ENCODE measurements at regions of chr3 and their contacts with region 1.

Region 1: DNA sequence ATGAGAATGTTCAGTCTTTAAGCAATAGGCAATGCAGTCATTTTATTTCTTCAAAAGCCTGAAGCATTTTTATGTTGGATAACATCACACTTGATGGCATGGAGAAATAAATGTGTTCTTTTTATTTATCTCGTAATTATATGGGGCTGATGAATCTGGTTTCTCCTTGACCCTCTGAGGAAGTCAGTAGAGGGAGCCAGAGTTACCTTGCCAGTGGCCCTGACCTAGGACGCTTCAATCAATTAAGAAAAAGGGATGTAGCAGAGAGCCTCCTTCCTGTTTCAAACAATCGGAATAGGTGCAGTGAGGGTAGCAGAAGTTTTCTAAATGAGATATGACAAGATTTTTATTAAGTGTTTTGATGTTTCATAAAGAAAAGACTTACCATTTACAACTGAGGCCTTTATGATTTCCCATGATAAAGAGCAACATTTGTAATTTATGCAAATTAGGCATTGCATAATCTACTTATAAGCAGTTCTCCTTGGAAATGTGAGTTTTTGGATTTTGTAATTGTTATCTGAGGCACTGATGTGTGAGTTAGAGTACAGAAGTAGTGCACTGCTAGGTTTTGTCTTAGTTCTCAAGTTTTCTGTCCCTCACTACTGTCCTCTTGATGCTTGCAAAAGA is 129.1 kb downstream of the RAP2B start:
- DNase-seq: peak; percentile 65
- H3K4me3 Mint-ChIP-seq: no peak overlapping the region
- H3K27ac Mint-ChIP-seq: no peak overlapping the region
- H3K4me1 Mint-ChIP-seq: peaks cover 40% of the 10 kb centered on the region
- H3K27me3 Mint-ChIP-seq: no peaks in the 10 kb centered on the region
- CTCF ChIP-seq: peak; percentile 52

Region 2: DNA sequence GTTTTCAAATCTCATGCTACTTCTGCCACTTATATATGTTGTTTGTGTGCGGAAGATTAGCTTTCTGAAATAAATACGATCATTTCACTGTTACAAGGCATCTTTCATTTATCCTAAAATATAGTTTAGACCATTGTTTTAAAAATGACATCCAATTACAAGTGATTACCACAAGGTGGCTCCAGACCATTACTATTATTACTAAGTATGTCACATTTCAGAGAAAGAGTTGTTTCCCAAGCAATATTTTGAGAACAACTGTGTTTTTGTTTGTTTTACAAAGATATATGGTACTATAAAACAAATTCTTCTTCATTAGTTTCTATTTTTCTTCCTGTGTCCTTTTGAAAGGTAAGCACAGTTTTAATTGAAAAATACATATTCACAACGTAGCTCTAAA is 265.1 kb before region 1 on chr3:
- CTCF ChIA-PET with region 1: interaction called, 7 read pairs
- POLR2A ChIA-PET with region 1: no interaction called
- intact Hi-C with region 1: loop called (anchors 1 kb)
- DNase-seq: peak; percentile 57
- H3K4me3 Mint-ChIP-seq: no peak overlapping the region
- H3K27ac Mint-ChIP-seq: no peak overlapping the region
- H3K4me1 Mint-ChIP-seq: no peaks in the 10 kb centered on the region
- H3K27me3 Mint-ChIP-seq: no peaks in the 10 kb centered on the region
- CTCF ChIP-seq: peak; percentile 62

Region 3: DNA sequence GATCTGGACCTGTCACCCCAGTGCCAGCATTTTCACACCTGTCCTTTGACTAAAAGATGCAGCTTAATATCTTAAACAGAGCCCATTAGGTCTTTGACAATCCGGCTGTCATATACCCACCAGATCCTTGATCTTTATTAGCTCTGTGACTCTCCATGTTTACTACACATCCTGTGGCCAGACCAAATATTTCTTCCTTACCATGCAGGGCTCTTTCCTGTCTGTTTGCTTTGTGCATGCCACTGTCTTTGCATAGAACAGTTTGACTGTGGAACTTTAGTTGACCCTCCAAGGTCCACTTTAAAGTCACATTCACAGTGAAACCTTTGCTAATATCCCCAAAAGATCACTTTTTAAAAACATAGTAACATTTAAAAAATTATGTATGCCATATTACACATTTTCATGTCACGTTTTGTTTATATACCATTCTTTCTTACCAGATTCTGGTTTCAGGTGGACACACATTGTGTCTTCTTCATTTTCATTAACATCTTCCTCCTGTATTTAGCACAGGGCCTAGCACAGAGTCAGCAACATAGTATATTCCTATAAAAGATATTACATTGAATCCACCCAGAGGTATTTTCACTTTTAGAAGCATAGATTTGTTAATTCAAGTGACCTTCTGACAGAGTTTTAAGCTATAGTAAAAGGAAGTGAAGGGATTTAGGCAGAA is 33.4 kb before region 1 on chr3:
- CTCF ChIA-PET with region 1: no interaction called
- POLR2A ChIA-PET with region 1: no interaction called
- intact Hi-C with region 1: no loop called
- DNase-seq: no peak
- H3K4me3 Mint-ChIP-seq: no peak overlapping the region
- H3K27ac Mint-ChIP-seq: no peak overlapping the region
- H3K4me1 Mint-ChIP-seq: peaks cover 7% of the 10 kb centered on the region
- H3K27me3 Mint-ChIP-seq: no peaks in the 10 kb centered on the region
- CTCF ChIP-seq: no peak

Region 4: GRCh38 chr3:153439777-153440176 is 148.6 kb after region 1 on chr3:
- CTCF ChIA-PET with region 1: interaction called, 4 read pairs
- POLR2A ChIA-PET with region 1: no interaction called
- intact Hi-C with region 1: loop called (anchors 5 kb)
- DNase-seq: peak; percentile 23
- H3K4me3 Mint-ChIP-seq: no peak overlapping the region
- H3K27ac Mint-ChIP-seq: no peak overlapping the region
- H3K4me1 Mint-ChIP-seq: no peaks in the 10 kb centered on the region
- H3K27me3 Mint-ChIP-seq: no peaks in the 10 kb centered on the region
- CTCF ChIP-seq: no peak

Region 5: DNA sequence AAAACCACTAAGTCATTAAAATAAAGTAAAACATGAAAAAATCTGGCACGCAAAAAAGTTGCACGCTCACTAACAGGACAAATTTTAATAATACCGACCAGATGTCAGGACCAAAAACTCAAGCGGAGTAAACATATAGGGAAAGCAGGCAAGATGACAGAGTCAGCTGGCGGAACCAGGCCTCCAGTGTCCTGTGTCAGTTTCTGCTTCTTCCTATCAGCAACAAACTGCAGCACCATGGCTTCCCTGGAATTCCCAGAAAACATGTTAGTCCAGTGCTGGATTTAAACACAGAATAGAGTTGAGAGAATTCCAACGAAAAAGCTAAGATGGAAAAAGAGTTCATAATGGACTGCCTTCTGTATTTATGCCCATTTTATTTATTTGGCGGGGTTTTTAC is 660.9 kb after region 1 on chr3:
- CTCF ChIA-PET with region 1: no interaction called
- POLR2A ChIA-PET with region 1: no interaction called
- intact Hi-C with region 1: no loop called
- DNase-seq: no peak
- H3K4me3 Mint-ChIP-seq: no peak overlapping the region
- H3K27ac Mint-ChIP-seq: no peak overlapping the region
- H3K4me1 Mint-ChIP-seq: no peaks in the 10 kb centered on the region
- H3K27me3 Mint-ChIP-seq: no peaks in the 10 kb centered on the region
- CTCF ChIP-seq: no peak

Measured in MCF 10A (cell line).